A549 (cell line): ENCODE measurements at regions of chr7 and their contacts with region 1.

Region 1: DNA sequence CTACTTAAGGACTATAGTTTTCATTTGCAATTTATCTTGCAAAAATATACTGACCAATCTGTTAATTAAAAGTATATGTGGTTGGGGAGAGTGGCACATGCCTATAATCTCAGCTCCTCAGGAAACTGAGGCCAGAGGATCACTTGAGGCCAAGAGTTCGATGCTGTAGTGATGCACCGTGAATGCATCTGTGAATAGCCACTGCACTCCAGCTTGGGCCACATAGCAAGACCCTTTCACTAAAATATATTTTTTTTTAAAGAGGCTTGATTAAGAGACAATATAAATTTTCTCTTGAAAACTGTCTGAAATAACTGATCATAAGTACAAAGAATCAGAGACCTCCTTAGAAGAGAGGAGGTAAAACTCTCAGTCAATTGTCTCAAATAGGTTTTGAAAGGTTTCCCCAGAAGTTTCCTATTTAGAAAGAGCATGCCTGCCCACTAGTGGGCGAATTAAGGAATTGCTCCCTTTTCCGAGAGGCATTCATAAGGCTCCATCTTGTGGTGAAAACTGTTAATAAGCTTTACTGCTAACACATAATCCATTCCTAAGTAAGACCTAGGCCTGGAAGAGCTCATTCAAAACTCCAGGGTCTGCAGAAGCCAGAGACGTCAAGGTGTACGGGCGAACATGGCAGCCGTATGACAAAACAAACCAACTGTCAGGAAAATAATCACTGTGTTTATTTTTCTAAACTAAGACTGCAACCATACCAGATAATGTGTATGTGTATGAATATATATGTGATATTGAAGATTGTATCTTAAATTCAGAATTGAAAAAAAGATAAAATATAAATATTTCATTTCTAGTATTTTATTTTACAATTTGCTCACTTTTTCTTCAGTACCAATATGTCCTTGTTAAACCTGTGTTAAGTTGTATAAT is 6.8 kb upstream of the TAS2R40 start:
- DNase-seq: peak; percentile 82 to 86
- ATAC-seq: peak; percentile 83 to 95
- H3K4me3 ChIP-seq: no peak overlapping the region
- H3K27ac ChIP-seq: no peak overlapping the region
- H3K4me1 ChIP-seq: no peaks in the 10 kb centered on the region
- CTCF ChIP-seq: peak; percentile 100
- EP300 ChIP-seq: no peak
- POLR2A ChIP-seq: no peak
- RAD21 ChIP-seq: peak; percentile 99

Region 2: GRCh38 chr7:143008007-143008901 is 206.8 kb before region 1 on chr7:
- CTCF ChIA-PET with region 1: interaction called, 175 read pairs
- POLR2A ChIA-PET with region 1: interaction called, 3 read pairs
- DNase-seq: peak; percentile 63 to 66
- ATAC-seq: peak; percentile 94 to 97
- H3K4me3 ChIP-seq: no peak overlapping the region
- H3K27ac ChIP-seq: no peak overlapping the region
- H3K4me1 ChIP-seq: no peaks in the 10 kb centered on the region
- CTCF ChIP-seq: peak; percentile 93
- EP300 ChIP-seq: no peak
- POLR2A ChIP-seq: no peak
- RAD21 ChIP-seq: peak; percentile 93 to 94

Region 3: GRCh38 chr7:143013893-143014292 is 201.1 kb before region 1 on chr7:
- CTCF ChIA-PET with region 1: interaction called, 175 read pairs
- POLR2A ChIA-PET with region 1: no interaction called
- DNase-seq: peak in 1 of 2 experiments; percentile 7
- ATAC-seq: no peak
- H3K4me3 ChIP-seq: no peak overlapping the region
- H3K27ac ChIP-seq: peak overlapping the region in 1 of 2 experiments; percentile 43; a peak in 2 of 6 replicates
- H3K4me1 ChIP-seq: peaks cover 13% of the 10 kb centered on the region; the same call in 2 of the 3 replicates
- CTCF ChIP-seq: no peak
- EP300 ChIP-seq: no peak
- POLR2A ChIP-seq: no peak
- RAD21 ChIP-seq: no peak

Region 4: DNA sequence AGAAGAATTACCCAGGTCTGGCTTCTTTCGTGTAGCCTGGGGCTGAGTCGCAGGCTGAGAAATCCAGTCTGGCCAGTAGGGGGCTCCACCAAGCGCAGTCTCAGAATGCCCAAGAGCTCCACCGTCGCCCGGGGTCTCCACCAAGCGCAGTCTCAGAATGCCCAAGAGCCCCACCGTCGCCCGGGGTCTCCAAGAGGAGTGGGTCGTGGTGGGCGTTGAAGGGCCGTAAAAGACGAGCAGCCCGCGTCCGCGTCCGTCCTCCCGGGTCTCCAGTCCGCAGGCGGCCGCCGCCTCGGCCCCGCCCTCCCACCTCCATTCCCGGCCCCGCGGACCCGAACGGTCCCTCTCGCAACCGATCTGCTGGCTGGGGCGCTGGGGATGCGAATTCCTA is 165.2 kb after region 1 on chr7:
- CTCF ChIA-PET with region 1: no interaction called
- POLR2A ChIA-PET with region 1: no interaction called
- DNase-seq: peak; percentile 83 to 89
- ATAC-seq: peak; percentile 64 to 82
- H3K4me3 ChIP-seq: peak overlapping the region; percentile 100
- H3K27ac ChIP-seq: peak overlapping the region; percentile 99 to 100
- H3K4me1 ChIP-seq: peaks cover 46% of the 10 kb centered on the region
- CTCF ChIP-seq: peak; percentile 85
- EP300 ChIP-seq: no peak
- POLR2A ChIP-seq: no peak
- RAD21 ChIP-seq: peak; percentile 26 to 60